ENCODE measurements at regions of chr7 and their contacts with region 1.

Region 1: GRCh38 chr7:151631968-151632749 is 112.5 kb upstream of the RHEB start:
- DNase-seq: peak; percentile 43 to 90
- H3K4me3 ChIP-seq: peak overlapping the region; percentile 84 to 91
- H3K27ac ChIP-seq: peak overlapping the region; percentile 94 to 95
- H3K4me1 ChIP-seq: peaks cover 12 to 30% of the 10 kb centered on the region in 2 donors
- H3K27me3 ChIP-seq: no peaks in the 10 kb centered on the region
- CTCF ChIP-seq: peak in 2 of 3 experiments; percentile 12 to 53

Region 2: DNA sequence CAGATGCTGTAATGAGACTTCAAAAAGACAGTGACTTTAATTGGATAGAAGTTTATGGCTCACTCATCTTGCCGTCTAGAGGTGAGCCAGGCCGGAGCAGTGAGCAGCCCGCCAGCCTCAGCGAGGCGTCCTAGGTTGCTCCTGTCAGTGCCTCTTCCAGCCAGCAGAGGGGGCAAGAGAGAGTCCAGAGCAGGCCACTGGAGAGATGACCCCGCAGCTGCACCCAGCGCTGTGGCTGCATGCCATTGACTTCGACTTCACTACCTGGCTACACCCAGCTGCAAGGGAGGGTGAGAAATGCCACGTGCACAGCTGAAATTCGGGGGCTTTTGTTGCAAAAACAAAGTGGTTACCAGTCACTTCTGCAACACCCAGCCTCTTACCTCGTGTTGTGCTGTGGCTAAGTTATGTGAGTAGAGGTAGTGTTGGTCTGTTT is 264.0 kb before region 1 on chr7:
- intact Hi-C with region 1: loop called (anchors 5 kb)
- DNase-seq: peak in 1 of 2 donors; percentile 90
- H3K4me3 ChIP-seq: no peak overlapping the region
- H3K27ac ChIP-seq: no peak overlapping the region
- H3K4me1 ChIP-seq: peaks cover 6 to 37% of the 10 kb centered on the region in 2 donors
- H3K27me3 ChIP-seq: no peaks in the 10 kb centered on the region
- CTCF ChIP-seq: peak; percentile 90 to 97 (median 92)

Region 3: GRCh38 chr7:151570366-151570915 is 61.7 kb before region 1 on chr7:
- intact Hi-C with region 1: loop called (anchors 5 kb)
- DNase-seq: no peak
- H3K4me3 ChIP-seq: no peak overlapping the region
- H3K27ac ChIP-seq: no peak overlapping the region
- H3K4me1 ChIP-seq: no peaks in the 10 kb centered on the region
- H3K27me3 ChIP-seq: no peaks in the 10 kb centered on the region
- CTCF ChIP-seq: peak; percentile 29 to 47 (median 30)

Region 4: GRCh38 chr7:151687523-151688218 is 55.5 kb after region 1 on chr7:
- intact Hi-C with region 1: loop called (anchors 2 kb)
- DNase-seq: peak; percentile 35 to 94
- H3K4me3 ChIP-seq: no peak overlapping the region
- H3K27ac ChIP-seq: peak overlapping the region; percentile 86 to 94
- H3K4me1 ChIP-seq: peaks cover 10 to 28% of the 10 kb centered on the region in 2 donors
- H3K27me3 ChIP-seq: no peaks in the 10 kb centered on the region
- CTCF ChIP-seq: peak in 1 of 3 experiments; percentile 7

Region 5: DNA sequence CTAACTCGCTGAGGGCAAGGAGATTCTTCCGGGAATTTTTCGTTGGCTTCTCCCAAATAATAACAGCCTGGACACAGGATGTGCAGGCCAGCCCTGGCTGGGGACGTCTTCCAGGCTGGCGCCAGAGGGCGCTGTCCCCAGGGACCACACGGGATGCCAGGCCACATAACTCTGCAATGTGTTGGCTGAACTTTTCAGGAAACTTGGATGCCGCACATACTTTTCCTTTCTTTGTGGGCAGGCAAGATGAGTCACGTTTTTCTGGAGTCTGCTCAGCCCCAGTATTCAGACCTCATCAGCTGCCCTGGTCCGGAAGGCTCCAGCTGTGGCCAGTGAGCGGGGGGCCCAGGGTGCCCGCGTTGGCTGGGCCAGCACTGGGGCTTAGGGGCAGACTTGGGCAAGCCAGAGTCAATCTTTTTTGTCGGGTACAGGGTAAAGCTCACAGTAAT is 122.0 kb after region 1 on chr7:
- intact Hi-C with region 1: loop called (anchors 1 kb)
- DNase-seq: peak; percentile 64 to 94
- H3K4me3 ChIP-seq: no peak overlapping the region
- H3K27ac ChIP-seq: peak overlapping the region; percentile 81 to 89
- H3K4me1 ChIP-seq: peaks cover 9 to 48% of the 10 kb centered on the region in 2 donors
- H3K27me3 ChIP-seq: no peaks in the 10 kb centered on the region
- CTCF ChIP-seq: peak; percentile 87 to 92 (median 91)

Region 6: GRCh38 chr7:151968357-151968756 is 336.2 kb after region 1 on chr7:
- intact Hi-C with region 1: no loop called
- DNase-seq: peak in 1 of 2 donors; percentile 75
- H3K4me3 ChIP-seq: no peak overlapping the region
- H3K27ac ChIP-seq: no peak overlapping the region
- H3K4me1 ChIP-seq: no peaks in the 10 kb centered on the region
- H3K27me3 ChIP-seq: no peaks in the 10 kb centered on the region
- CTCF ChIP-seq: no peak

Measured in ascending aorta (tissue), 2 donors.